ENCODE measurements at regions of chr7 and their contacts with region 1.

Region 1: GRCh38 chr7:80134536-80135320 is at the start of gene GNAI1:
- DNase-seq: peak; percentile 27
- ATAC-seq: peak; percentile 84
- H3K4me3 ChIP-seq: peak within 1 kb of the TSS; percentile 82 to 91 (median 89)
- H3K27ac ChIP-seq: peak within 1 kb of the TSS; percentile 43
- H3K4me1 ChIP-seq: peaks cover 40% of the 10 kb centered on the region
- H3K27me3 ChIP-seq: no peaks in the 10 kb centered on the region; a peak in 1 of 5 replicates
- CTCF ChIP-seq: peak; percentile 45
- EP300 ChIP-seq: no peak
- POLR2A ChIP-seq: peak in 1 of 2 experiments; percentile 45; a peak in 1 of 4 replicates
- RAD21 ChIP-seq: peak; percentile 66
- total RNA-seq, gene GNAI1: 5.7 and 8.8 TPM in 2 replicates

Region 2: GRCh38 chr7:80095545-80095944 is 39.2 kb before region 1 on chr7:
- CTCF ChIA-PET with region 1: no interaction called
- POLR2A ChIA-PET with region 1: no interaction called
- in situ Hi-C with region 1: no loop called
- intact Hi-C with region 1: loop called (anchors 1 kb)
- DNase-seq: no peak
- ATAC-seq: no peak
- H3K4me3 ChIP-seq: no peak overlapping the region
- H3K27ac ChIP-seq: no peak overlapping the region
- H3K4me1 ChIP-seq: no peaks in the 10 kb centered on the region
- H3K27me3 ChIP-seq: no peaks in the 10 kb centered on the region
- CTCF ChIP-seq: no peak
- EP300 ChIP-seq: no peak
- POLR2A ChIP-seq: no peak
- RAD21 ChIP-seq: no peak

Region 3: DNA sequence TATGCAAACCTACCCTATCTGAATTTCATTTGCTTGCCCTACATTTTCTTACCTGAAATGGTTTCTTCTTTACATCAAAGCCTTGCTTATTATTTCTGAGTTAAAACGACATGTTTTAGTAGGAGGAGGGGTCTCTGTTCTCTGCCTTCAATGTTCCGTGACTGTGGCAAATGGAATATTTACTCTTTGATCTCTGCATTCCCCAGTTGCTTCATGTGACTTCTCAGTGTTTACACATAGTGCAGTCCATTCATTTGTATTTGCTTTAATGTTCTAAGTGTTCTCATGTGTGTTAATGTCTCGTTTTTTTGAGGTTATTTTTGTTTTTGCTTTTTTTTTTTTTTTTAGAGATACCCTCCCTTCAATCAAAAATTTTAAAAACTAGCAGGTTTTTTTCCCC is 75.7 kb after region 1 on chr7:
- CTCF ChIA-PET with region 1: no interaction called
- POLR2A ChIA-PET with region 1: interaction called, 3 read pairs
- in situ Hi-C with region 1: no loop called
- intact Hi-C with region 1: loop called (anchors 5 kb)
- DNase-seq: peak; percentile 96
- ATAC-seq: peak; percentile 100
- H3K4me3 ChIP-seq: no peak overlapping the region
- H3K27ac ChIP-seq: peak overlapping the region; percentile 61
- H3K4me1 ChIP-seq: peaks cover 54% of the 10 kb centered on the region
- H3K27me3 ChIP-seq: no peaks in the 10 kb centered on the region
- CTCF ChIP-seq: no peak
- EP300 ChIP-seq: peak; percentile 93 to 94
- POLR2A ChIP-seq: no peak
- RAD21 ChIP-seq: no peak

Region 4: GRCh38 chr7:80288175-80289122 is 153.7 kb after region 1 on chr7:
- CTCF ChIA-PET with region 1: interaction called, 8 read pairs
- POLR2A ChIA-PET with region 1: no interaction called
- in situ Hi-C with region 1: loop called (anchors 10 kb)
- intact Hi-C with region 1: loop called (anchors 1 kb)
- DNase-seq: peak; percentile 15
- ATAC-seq: peak; percentile 75
- H3K4me3 ChIP-seq: no peak overlapping the region
- H3K27ac ChIP-seq: no peak overlapping the region
- H3K4me1 ChIP-seq: no peaks in the 10 kb centered on the region
- H3K27me3 ChIP-seq: no peaks in the 10 kb centered on the region
- CTCF ChIP-seq: peak; percentile 52
- EP300 ChIP-seq: no peak
- POLR2A ChIP-seq: no peak
- RAD21 ChIP-seq: peak; percentile 33; the same call in 1 of the 2 replicates

Region 5: GRCh38 chr7:80453699-80454340 is 319.1 kb after region 1 on chr7:
- CTCF ChIA-PET with region 1: interaction called, 3 read pairs
- POLR2A ChIA-PET with region 1: no interaction called
- in situ Hi-C with region 1: no loop called
- intact Hi-C with region 1: loop called (anchors 1 kb)
- DNase-seq: peak; percentile 12
- ATAC-seq: no peak
- H3K4me3 ChIP-seq: no peak overlapping the region
- H3K27ac ChIP-seq: no peak overlapping the region
- H3K4me1 ChIP-seq: peaks cover 24% of the 10 kb centered on the region
- H3K27me3 ChIP-seq: no peaks in the 10 kb centered on the region
- CTCF ChIP-seq: peak; percentile 55
- EP300 ChIP-seq: no peak
- POLR2A ChIP-seq: no peak
- RAD21 ChIP-seq: no peak

Region 6: DNA sequence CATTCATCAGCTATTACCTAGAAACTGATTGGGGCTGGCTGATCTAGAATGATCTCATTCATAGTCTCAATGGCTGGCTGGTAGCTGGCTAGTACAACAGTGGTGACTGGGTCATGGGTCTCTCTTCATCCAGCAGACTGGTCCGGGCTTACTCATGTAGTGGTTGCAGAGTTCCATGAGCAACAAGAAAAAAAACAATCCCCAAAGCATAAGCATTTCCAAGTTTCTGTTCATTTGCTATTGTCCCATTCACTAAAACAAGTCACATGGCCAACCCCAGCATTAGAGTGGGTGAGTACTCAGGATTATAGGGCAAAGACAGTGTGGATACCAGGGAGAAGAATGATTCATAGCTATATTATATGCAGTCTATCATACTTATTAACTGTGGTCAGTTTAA is 869.4 kb after region 1 on chr7:
- CTCF ChIA-PET with region 1: no interaction called
- POLR2A ChIA-PET with region 1: no interaction called
- in situ Hi-C with region 1: no loop called
- intact Hi-C with region 1: no loop called
- DNase-seq: no peak
- ATAC-seq: no peak
- H3K4me3 ChIP-seq: no peak overlapping the region
- H3K27ac ChIP-seq: no peak overlapping the region
- H3K4me1 ChIP-seq: no peaks in the 10 kb centered on the region
- H3K27me3 ChIP-seq: no peaks in the 10 kb centered on the region
- CTCF ChIP-seq: no peak
- EP300 ChIP-seq: no peak
- POLR2A ChIP-seq: no peak
- RAD21 ChIP-seq: no peak